Activated naive CD8-positive, alpha-beta T cell treated with anti-CD3 and anti-CD28 coated beads, Interleukin-2, amount 10 ng/mL, durations not matched to agents 7 days and 5 days (primary cell): ENCODE measurements at regions of chr6 and their contacts with region 1.

Region 1: DNA sequence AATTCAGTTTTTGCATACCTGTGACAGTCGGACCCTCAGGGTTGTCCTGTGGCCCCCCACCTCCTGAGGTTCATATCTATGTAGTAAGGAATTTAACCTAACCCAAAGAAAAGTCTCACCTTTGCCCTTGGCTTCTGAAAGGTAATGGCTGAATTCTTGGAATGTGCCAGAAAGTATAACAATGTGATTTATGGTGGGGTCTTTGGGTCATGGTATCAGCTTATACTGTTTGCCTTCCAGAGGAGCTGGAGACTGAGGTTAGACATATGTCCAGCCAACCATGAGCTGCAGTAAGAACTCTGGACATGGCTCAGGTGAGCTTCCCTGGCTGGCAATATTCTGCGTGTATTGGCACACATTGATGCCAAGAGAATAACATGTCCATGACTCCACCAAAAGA is 26.9 kb downstream of the DDX43 start:
- DNase-seq: no peak
- ATAC-seq: no peak
- H3K4me3 Mint-ChIP-seq: peak overlapping the region; percentile 73
- H3K27ac Mint-ChIP-seq: peak overlapping the region; percentile 95
- H3K4me1 Mint-ChIP-seq: peaks cover 27% of the 10 kb centered on the region
- H3K27me3 Mint-ChIP-seq: no peaks in the 10 kb centered on the region

Region 2: DNA sequence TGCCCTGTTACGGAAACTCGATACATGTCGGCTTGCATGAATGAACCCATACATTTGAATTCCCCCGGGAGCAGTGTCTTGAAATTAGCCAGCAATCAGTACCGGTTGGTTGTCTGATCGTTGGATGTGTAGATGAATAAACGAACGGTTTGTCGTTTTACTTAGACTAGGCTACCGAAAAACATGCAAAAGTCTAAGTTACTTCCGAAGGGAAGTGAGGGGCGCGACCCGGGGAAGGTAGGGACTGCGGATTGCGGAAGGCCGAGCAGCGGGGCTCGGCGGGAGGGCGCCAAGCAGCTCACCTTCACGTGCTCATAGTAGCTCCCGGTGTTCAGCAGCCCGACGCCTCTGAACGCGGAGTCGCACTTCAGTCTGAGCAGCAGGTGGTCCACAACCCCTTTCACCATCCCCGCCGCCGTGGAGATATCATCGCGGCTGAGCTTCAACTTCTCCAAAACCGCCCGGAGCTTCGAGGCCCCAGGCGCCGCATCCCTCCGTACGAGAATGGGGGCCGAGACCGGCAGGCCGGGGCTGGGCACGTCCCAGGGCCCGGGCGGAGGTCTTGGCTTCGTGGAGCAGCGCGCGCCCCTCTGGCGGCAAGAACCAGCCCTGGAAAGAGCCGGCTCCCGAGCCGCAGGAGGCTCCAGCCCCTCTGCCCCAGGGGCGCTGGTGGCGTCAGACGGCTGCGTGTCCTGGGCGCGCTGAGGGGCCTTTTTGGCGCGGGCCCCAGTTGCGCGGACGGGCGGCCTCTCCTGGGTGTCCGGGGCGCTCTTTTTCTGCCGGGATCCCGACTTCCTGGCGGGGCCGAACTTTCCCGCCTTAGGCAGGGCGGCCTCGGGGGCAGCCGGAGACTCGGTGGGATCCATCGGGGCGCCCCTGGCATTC is 29.9 kb after region 1 on chr6:
- POLR2A ChIA-PET with region 1: interaction called, 23 read pairs
- DNase-seq: peak; percentile 71
- ATAC-seq: peak; percentile 65
- H3K4me3 Mint-ChIP-seq: peak overlapping the region; percentile 97
- H3K27ac Mint-ChIP-seq: peak overlapping the region; percentile 90
- H3K4me1 Mint-ChIP-seq: peaks cover 34% of the 10 kb centered on the region
- H3K27me3 Mint-ChIP-seq: no peaks in the 10 kb centered on the region